ENCODE measurements at regions of chr18 and their contacts with region 1.

Region 1: DNA sequence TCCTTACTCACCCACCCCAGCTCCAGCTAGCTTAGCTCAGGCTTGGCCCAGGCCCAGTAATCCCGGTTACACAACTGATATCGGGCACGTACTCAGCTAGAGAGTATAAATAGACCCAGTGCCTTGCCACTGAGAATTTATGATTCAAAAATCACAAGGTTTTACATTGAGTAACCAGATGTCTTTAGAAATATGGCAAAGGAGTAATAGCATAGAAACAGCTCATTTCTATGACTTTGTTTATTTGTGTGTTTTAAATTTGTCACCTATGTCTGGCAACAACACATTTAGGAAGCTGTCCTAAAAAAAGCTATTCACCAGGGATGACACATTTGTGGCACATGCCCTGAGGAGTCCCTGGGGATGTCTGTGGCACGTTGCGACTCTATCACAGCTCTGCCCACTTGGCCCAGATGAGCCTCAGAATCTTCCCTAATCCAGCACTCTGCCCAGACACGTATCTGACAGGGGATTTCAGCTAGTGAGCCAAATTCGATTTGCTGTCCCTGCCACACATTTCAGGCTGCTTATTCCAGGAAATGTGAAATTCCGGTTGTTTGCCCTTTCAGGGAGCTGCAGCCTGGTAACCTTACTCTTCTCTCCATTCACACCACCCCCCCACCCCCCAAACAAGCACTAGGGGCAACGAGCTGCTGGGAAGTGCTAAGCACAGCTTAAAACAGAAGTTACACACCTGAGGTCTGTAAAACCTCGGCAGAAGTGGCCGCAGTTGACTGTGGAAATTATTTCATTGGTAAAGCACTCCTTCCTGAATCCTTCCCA is 85.4 kb upstream of the ZCCHC2 start:
- DNase-seq: peak; percentile 58 to 83
- ATAC-seq: peak; percentile 30

Region 2: DNA sequence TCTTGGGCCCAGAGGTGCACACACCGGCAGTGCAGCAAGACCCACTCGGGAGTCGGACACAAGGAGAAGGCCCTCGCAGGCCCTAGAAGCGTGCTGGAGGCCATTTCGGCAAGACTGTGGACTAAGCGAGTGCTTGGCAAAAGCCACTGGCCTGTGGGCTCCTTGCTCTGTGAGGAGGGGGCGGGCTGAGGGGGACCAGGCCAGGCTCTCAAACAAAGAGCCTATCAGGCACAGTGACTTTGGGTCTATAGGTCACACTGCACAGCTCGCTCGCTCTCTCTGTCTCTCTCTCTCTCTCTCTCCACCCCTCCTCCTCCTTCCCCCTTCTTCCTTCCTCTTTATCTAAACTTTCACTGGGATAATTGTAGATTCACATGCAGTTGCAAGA is 61.8 kb after region 1 on chr18:
- intact Hi-C with region 1: loop called in 1 of 2 experiments (anchors 10 kb)
- DNase-seq: no peak
- ATAC-seq: no peak